ENCODE measurements at regions of chr10 and their contacts with region 1.

Region 1: GRCh38 chr10:93554760-93555432 is 11.6 kb upstream of the FFAR4 start:
- DNase-seq: peak; percentile 24 to 52
- ATAC-seq: peak; percentile 40 to 69 (median 47)
- H3K4me3 ChIP-seq: no peak overlapping the region
- H3K4me3 Mint-ChIP-seq: no peak overlapping the region
- H3K27ac ChIP-seq: no peak overlapping the region
- H3K27ac Mint-ChIP-seq: peak overlapping the region in 1 of 2 donors; percentile 56
- H3K4me1 ChIP-seq: no peaks in the 10 kb centered on the region
- H3K4me1 Mint-ChIP-seq: no peaks in the 10 kb centered on the region
- H3K27me3 ChIP-seq: no peaks in the 10 kb centered on the region
- H3K27me3 Mint-ChIP-seq: peaks cover 7 to 9% of the 10 kb centered on the region in 2 donors
- CTCF ChIP-seq: peak; percentile 26

Region 2: GRCh38 chr10:93859049-93859655 is 304.3 kb after region 1 on chr10:
- intact Hi-C with region 1: loop called (anchors 1 kb)
- DNase-seq: peak in 1 of 2 donors; percentile 23
- ATAC-seq: no peak
- H3K4me3 ChIP-seq: no peak overlapping the region
- H3K4me3 Mint-ChIP-seq: no peak overlapping the region
- H3K27ac ChIP-seq: no peak overlapping the region
- H3K27ac Mint-ChIP-seq: no peak overlapping the region
- H3K4me1 ChIP-seq: no peaks in the 10 kb centered on the region
- H3K4me1 Mint-ChIP-seq: no peaks in the 10 kb centered on the region
- H3K27me3 ChIP-seq: no peaks in the 10 kb centered on the region
- H3K27me3 Mint-ChIP-seq: peaks cover 0 to 3% of the 10 kb centered on the region in 2 donors
- CTCF ChIP-seq: no peak

Region 3: DNA sequence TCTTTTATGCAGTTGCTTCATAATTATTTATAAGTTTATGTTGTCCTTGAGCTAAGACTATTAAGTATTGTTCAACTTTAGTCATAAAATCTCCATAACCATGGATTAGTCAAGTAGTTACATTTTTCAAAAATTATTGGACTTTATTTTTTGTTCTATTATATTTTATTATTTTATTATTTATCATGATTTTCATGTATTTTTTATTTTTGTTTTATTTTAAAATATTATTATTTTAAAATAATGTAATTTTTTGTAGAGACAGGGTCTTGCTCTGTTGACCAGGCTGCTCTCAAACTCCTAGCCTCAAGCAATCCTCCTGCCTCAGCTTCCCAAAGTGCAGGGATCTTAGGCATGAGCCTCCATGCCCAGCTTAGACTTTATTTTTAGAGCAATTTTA is 705.6 kb after region 1 on chr10:
- intact Hi-C with region 1: no loop called
- DNase-seq: no peak
- ATAC-seq: no peak
- H3K4me3 ChIP-seq: no peak overlapping the region
- H3K4me3 Mint-ChIP-seq: no peak overlapping the region
- H3K27ac ChIP-seq: no peak overlapping the region
- H3K27ac Mint-ChIP-seq: no peak overlapping the region
- H3K4me1 ChIP-seq: no peaks in the 10 kb centered on the region
- H3K4me1 Mint-ChIP-seq: peaks cover 3 to 5% of the 10 kb centered on the region in 2 donors
- H3K27me3 ChIP-seq: no peaks in the 10 kb centered on the region
- H3K27me3 Mint-ChIP-seq: peaks cover 0 to 3% of the 10 kb centered on the region in 2 donors
- CTCF ChIP-seq: no peak

Measured in natural killer cell (primary cell).